ENCODE measurements at regions of chr13 and their contacts with region 1.

Region 1: GRCh38 chr13:99442273-99442895 is 58.9 kb upstream of the TM9SF2 start:
- DNase-seq: no peak
- H3K4me3 ChIP-seq: no peak overlapping the region
- H3K27ac ChIP-seq: no peak overlapping the region
- H3K27me3 ChIP-seq: peaks cover 18% of the 10 kb centered on the region
- CTCF ChIP-seq: peak; percentile 92

Region 2: GRCh38 chr13:99356158-99357091 is 86.0 kb before region 1 on chr13:
- CTCF ChIA-PET with region 1: no interaction called
- POLR2A ChIA-PET with region 1: no interaction called
- DNase-seq: peak; percentile 39
- H3K4me3 ChIP-seq: peak overlapping the region; percentile 33
- H3K27ac ChIP-seq: peak overlapping the region; percentile 55
- H3K27me3 ChIP-seq: no peaks in the 10 kb centered on the region
- CTCF ChIP-seq: no peak

Region 3: GRCh38 chr13:99606324-99607066 is 164.1 kb after region 1 on chr13:
- CTCF ChIA-PET with region 1: interaction called, 6 read pairs
- POLR2A ChIA-PET with region 1: interaction called, 10 read pairs
- DNase-seq: peak; percentile 44
- H3K4me3 ChIP-seq: peak within 1 kb of the TSS; percentile 76
- H3K27ac ChIP-seq: no peak within 1 kb of the TSS
- H3K27me3 ChIP-seq: peaks cover 8% of the 10 kb centered on the region
- CTCF ChIP-seq: no peak

Region 4: DNA sequence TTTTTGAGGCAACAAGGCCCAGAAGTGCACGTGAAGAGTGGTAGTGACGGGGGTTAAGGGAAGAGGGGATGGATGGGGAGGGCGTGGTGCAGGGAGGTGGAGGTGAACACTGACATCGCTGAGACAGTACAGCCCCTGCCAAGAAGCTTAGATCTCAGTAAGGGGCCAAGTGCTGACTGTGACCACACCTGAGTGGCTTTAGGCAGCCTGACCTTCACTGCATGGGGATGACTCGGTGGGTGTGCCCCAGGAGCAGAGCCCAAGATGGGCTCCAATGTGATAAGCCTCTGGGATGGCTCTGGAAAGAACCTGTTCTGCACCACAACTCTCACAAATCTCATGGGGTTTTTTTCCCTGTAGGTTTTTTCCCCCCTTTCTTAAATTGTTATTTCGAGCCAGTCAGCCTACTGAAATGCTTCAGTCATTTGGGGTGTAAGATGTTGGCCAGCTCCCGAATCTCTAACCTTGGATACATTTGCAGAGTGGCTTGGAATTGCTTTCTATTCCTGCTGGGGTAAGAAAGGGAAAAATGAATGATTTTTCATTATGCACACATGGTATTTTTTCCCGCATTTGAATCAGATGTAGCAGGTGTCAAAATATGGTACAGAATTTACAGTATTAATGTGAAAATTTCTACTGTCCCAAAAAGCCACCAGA is 223.9 kb after region 1 on chr13:
- CTCF ChIA-PET with region 1: no interaction called
- POLR2A ChIA-PET with region 1: no interaction called
- DNase-seq: no peak
- H3K4me3 ChIP-seq: no peak overlapping the region
- H3K27ac ChIP-seq: no peak overlapping the region
- H3K27me3 ChIP-seq: peaks cover 9% of the 10 kb centered on the region
- CTCF ChIP-seq: no peak

Region 5: DNA sequence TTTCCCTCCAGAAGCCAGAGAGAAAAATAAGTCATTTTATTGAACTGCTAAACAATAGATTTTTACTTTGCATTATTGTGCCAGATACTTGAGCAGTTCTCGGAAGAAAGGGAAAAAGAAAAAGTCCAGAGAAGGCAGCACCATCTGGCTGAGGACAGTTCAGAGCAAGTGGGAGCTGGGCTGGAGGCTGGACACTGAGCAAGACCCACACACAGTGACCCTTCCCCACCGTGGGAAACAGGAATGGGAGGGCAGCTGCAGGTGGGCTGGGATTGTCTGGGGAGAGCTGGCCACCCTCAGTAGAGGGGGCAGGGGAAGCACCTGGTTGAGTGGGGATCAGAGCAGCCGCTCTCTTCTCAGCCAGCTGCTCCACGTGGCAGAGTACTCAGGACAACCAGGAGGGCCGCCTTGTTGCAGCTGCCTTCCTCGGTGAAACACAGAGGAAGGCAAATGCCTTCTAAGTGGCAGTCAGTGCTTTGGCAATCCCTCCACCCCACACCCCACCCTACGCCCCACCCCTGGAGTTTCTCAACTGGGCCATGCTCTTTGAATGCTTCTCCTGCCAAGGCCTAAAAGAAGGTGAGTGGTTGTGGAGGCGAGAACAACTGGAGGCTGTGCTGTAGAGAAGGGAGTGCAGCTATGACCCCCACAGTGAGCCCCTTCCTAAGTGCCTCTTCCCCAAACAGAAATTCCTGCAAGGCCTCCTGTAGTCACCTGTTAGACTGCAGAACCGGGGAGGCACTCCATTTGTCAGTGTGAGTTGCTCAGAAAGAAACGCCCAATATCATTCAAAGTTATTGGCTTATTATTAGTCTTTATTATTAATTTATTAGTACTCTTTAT is 349.9 kb after region 1 on chr13:
- CTCF ChIA-PET with region 1: no interaction called
- POLR2A ChIA-PET with region 1: no interaction called
- DNase-seq: no peak
- H3K4me3 ChIP-seq: no peak overlapping the region
- H3K27ac ChIP-seq: no peak overlapping the region
- H3K27me3 ChIP-seq: peaks cover 2% of the 10 kb centered on the region
- CTCF ChIP-seq: no peak

Measured in AG04450 (cell line).